IMR-90 (cell line): ENCODE measurements at regions of chr18 and their contacts with region 1.

Region 1: GRCh38 chr18:36757081-36757480 is 71.7 kb downstream of the TPGS2 start:
- DNase-seq: peak; percentile 80
- ATAC-seq: peak; percentile 82
- H3K4me3 ChIP-seq: no peak overlapping the region
- H3K27ac ChIP-seq: no peak overlapping the region
- H3K4me1 ChIP-seq: peaks cover 22% of the 10 kb centered on the region
- H3K27me3 ChIP-seq: no peaks in the 10 kb centered on the region
- CTCF ChIP-seq: peak; percentile 86
- POLR2A ChIP-seq: no peak
- RAD21 ChIP-seq: peak; percentile 92

Region 2: GRCh38 chr18:36015629-36016028 is 741.5 kb before region 1 on chr18:
- CTCF ChIA-PET with region 1: no interaction called
- POLR2A ChIA-PET with region 1: no interaction called
- dilution Hi-C with region 1: no loop called
- in situ Hi-C with region 1: no loop called
- intact Hi-C with region 1: loop called (anchors 5 kb)
- DNase-seq: no peak
- ATAC-seq: no peak
- H3K4me3 ChIP-seq: no peak overlapping the region
- H3K27ac ChIP-seq: no peak overlapping the region
- H3K4me1 ChIP-seq: peaks cover 2% of the 10 kb centered on the region; the same call in 1 of the 2 replicates
- H3K27me3 ChIP-seq: no peaks in the 10 kb centered on the region
- CTCF ChIP-seq: no peak
- POLR2A ChIP-seq: no peak
- RAD21 ChIP-seq: no peak

Region 3: GRCh38 chr18:36139250-36139649 is 617.8 kb before region 1 on chr18:
- CTCF ChIA-PET with region 1: no interaction called
- POLR2A ChIA-PET with region 1: no interaction called
- dilution Hi-C with region 1: no loop called
- in situ Hi-C with region 1: no loop called
- intact Hi-C with region 1: loop called (anchors 5 kb)
- DNase-seq: no peak
- ATAC-seq: no peak
- H3K4me3 ChIP-seq: no peak overlapping the region
- H3K27ac ChIP-seq: no peak overlapping the region
- H3K4me1 ChIP-seq: no peaks in the 10 kb centered on the region
- H3K27me3 ChIP-seq: no peaks in the 10 kb centered on the region
- CTCF ChIP-seq: no peak
- POLR2A ChIP-seq: no peak
- RAD21 ChIP-seq: no peak

Region 4: DNA sequence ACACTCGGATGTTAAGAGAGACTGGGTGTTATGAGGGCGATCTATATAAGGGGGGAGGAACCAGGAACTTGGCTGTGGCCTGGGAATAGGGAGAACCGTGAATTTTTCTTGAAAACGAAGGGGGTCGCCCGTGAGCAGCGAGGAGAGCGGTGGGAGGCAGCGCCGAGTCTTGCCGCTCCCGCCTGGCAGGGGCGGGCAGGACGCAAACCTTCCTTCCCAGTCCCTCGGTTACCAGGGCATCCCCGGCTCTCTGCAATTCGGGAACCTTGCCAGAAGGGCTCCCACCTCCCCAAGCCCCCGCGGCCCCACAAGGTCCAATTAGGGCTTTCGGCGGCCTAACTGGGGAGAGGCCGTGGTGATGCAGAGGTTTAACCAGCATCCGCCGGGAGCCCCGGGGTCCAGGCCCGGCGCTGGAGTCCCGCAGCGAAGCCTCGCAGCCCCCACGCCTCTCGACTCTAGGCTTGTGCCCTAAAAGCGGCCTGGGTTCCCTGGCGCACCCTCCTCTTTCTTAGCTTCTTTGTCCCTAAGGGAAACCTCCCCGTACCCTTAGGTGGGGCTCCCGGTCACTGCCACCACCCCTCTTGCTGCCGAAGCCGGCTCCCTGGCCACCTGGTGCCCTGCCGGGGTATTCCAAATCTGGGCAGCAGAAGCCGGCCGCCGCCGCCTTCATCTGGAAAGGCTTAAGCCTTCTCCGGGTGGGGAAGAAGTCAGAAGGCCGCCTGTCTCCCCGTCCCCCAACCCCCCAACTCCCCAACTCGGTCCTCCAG is 460.2 kb before region 1 on chr18:
- CTCF ChIA-PET with region 1: no interaction called
- POLR2A ChIA-PET with region 1: no interaction called
- dilution Hi-C with region 1: no loop called
- in situ Hi-C with region 1: no loop called
- intact Hi-C with region 1: loop called (anchors 1 kb)
- DNase-seq: peak; percentile 77
- ATAC-seq: peak; percentile 67
- H3K4me3 ChIP-seq: peak overlapping the region; percentile 98
- H3K27ac ChIP-seq: peak overlapping the region; percentile 63
- H3K4me1 ChIP-seq: peaks cover 4% of the 10 kb centered on the region
- H3K27me3 ChIP-seq: no peaks in the 10 kb centered on the region; the same call in 1 of the 2 replicates
- CTCF ChIP-seq: peak; percentile 71
- POLR2A ChIP-seq: peak; percentile 54; the same call in 1 of the 2 replicates
- RAD21 ChIP-seq: peak; percentile 73

Region 5: GRCh38 chr18:36572135-36572856 is 184.8 kb before region 1 on chr18:
- CTCF ChIA-PET with region 1: no interaction called
- POLR2A ChIA-PET with region 1: no interaction called
- dilution Hi-C with region 1: no loop called
- in situ Hi-C with region 1: no loop called
- intact Hi-C with region 1: loop called (anchors 5 kb)
- DNase-seq: peak; percentile 49
- ATAC-seq: peak; percentile 73
- H3K4me3 ChIP-seq: no peak overlapping the region
- H3K27ac ChIP-seq: no peak overlapping the region
- H3K4me1 ChIP-seq: peaks cover 2% of the 10 kb centered on the region; the same call in 1 of the 2 replicates
- H3K27me3 ChIP-seq: no peaks in the 10 kb centered on the region
- CTCF ChIP-seq: peak; percentile 53
- POLR2A ChIP-seq: no peak
- RAD21 ChIP-seq: peak; percentile 58

Region 6: GRCh38 chr18:36620788-36621187 is 136.3 kb before region 1 on chr18:
- CTCF ChIA-PET with region 1: no interaction called
- POLR2A ChIA-PET with region 1: no interaction called
- dilution Hi-C with region 1: no loop called
- in situ Hi-C with region 1: no loop called
- intact Hi-C with region 1: no loop called
- DNase-seq: no peak
- ATAC-seq: no peak
- H3K4me3 ChIP-seq: no peak overlapping the region
- H3K27ac ChIP-seq: no peak overlapping the region
- H3K4me1 ChIP-seq: peaks cover 3% of the 10 kb centered on the region; the same call in 1 of the 2 replicates
- H3K27me3 ChIP-seq: no peaks in the 10 kb centered on the region
- CTCF ChIP-seq: no peak
- POLR2A ChIP-seq: no peak
- RAD21 ChIP-seq: no peak

Region 7: DNA sequence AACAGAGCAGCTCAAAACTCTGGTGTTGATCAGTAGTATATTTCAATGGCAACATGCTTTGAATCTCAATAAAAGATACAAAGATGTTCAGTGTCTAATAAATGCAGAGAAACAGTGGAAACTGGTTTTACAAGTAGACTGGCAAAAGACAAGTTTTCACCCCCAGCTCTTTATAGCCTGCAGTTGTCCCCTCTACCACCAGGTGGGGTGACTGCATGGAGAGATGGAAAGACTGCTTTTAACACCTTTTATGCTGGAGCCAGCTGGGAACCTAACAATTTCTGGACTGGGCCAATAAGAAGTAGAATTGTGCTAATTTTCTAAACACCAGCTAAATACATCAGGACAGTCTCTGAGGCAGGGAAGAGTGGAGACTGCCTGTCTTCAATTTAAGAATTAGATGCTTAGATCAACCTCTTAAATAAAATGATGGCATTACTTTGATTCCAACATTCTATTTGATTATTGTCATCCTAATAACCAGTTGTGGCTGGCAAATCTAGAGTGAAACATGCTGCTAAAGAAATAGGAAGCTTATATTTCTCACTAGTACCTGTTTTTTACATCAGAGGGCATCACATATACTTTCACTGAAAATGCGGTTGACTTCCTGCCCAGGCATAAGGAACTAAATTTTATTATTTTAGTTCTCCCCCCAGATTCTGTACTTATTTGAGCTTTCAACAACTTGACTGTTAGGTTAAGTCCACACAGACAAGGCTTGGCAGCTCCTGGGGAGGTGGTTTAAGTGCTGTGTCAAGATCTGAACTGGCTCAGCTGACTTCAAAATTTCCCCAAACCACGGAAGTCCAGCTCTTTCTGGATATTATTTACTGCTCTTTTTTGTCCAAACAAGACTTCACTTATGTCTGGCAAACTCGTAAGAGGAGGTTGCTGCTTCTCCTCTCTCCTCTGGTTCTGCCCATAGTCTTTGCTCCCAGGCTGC is 68.8 kb before region 1 on chr18:
- CTCF ChIA-PET with region 1: interaction called, 9 read pairs
- POLR2A ChIA-PET with region 1: no interaction called
- dilution Hi-C with region 1: no loop called
- in situ Hi-C with region 1: loop called (anchors 5 kb)
- intact Hi-C with region 1: loop called (anchors 1 kb)
- DNase-seq: peak; percentile 74
- ATAC-seq: peak; percentile 63
- H3K4me3 ChIP-seq: no peak overlapping the region
- H3K27ac ChIP-seq: no peak overlapping the region
- H3K4me1 ChIP-seq: peaks cover 27% of the 10 kb centered on the region
- H3K27me3 ChIP-seq: no peaks in the 10 kb centered on the region
- CTCF ChIP-seq: peak; percentile 86
- POLR2A ChIP-seq: no peak
- RAD21 ChIP-seq: peak; percentile 80

Region 8: GRCh38 chr18:36828157-36828629 is 71.1 kb after region 1 on chr18:
- CTCF ChIA-PET with region 1: no interaction called
- POLR2A ChIA-PET with region 1: no interaction called
- dilution Hi-C with region 1: no loop called
- in situ Hi-C with region 1: no loop called
- intact Hi-C with region 1: no loop called
- DNase-seq: peak; percentile 55
- ATAC-seq: no peak; the same call in 1 of the 2 replicates
- H3K4me3 ChIP-seq: peak overlapping the region; percentile 98
- H3K27ac ChIP-seq: peak overlapping the region; percentile 95
- H3K4me1 ChIP-seq: peaks cover 2% of the 10 kb centered on the region; the same call in 1 of the 2 replicates
- H3K27me3 ChIP-seq: no peaks in the 10 kb centered on the region
- CTCF ChIP-seq: no peak
- POLR2A ChIP-seq: no peak; the same call in 1 of the 2 replicates
- RAD21 ChIP-seq: no peak